ENCODE measurements at regions of chr20 and their contacts with region 1.

Region 1: GRCh38 chr20:58447511-58448391 is 58.7 kb downstream of the VAPB start:
- DNase-seq: peak; percentile 14 to 53
- ATAC-seq: peak; percentile 56 to 86
- H3K4me3 ChIP-seq: no peak overlapping the region
- H3K27ac ChIP-seq: no peak overlapping the region
- H3K4me1 ChIP-seq: no peaks in the 10 kb centered on the region
- H3K27me3 ChIP-seq: no peaks in the 10 kb centered on the region
- CTCF ChIP-seq: peak; percentile 49 to 72 (median 58)
- POLR2A ChIP-seq: no peak

Region 2: GRCh38 chr20:58112017-58112781 is 335.6 kb before region 1 on chr20:
- in situ Hi-C with region 1: no loop called
- intact Hi-C with region 1: no loop called
- DNase-seq: peak in 1 of 2 donors; percentile 21
- ATAC-seq: peak; percentile 56 to 58
- H3K4me3 ChIP-seq: no peak overlapping the region
- H3K27ac ChIP-seq: peak overlapping the region in 1 of 4 donors; percentile 30
- H3K4me1 ChIP-seq: no peaks in the 10 kb centered on the region
- H3K27me3 ChIP-seq: no peaks in the 10 kb centered on the region
- CTCF ChIP-seq: no peak
- POLR2A ChIP-seq: no peak

Region 3: GRCh38 chr20:58246346-58246745 is 201.4 kb before region 1 on chr20:
- in situ Hi-C with region 1: loop called in 2 of 4 experiments (anchors 10 kb)
- intact Hi-C with region 1: no loop called
- DNase-seq: no peak
- ATAC-seq: no peak
- H3K4me3 ChIP-seq: no peak overlapping the region
- H3K27ac ChIP-seq: no peak overlapping the region
- H3K4me1 ChIP-seq: no peaks in the 10 kb centered on the region
- H3K27me3 ChIP-seq: no peaks in the 10 kb centered on the region
- CTCF ChIP-seq: no peak
- POLR2A ChIP-seq: no peak

Region 4: DNA sequence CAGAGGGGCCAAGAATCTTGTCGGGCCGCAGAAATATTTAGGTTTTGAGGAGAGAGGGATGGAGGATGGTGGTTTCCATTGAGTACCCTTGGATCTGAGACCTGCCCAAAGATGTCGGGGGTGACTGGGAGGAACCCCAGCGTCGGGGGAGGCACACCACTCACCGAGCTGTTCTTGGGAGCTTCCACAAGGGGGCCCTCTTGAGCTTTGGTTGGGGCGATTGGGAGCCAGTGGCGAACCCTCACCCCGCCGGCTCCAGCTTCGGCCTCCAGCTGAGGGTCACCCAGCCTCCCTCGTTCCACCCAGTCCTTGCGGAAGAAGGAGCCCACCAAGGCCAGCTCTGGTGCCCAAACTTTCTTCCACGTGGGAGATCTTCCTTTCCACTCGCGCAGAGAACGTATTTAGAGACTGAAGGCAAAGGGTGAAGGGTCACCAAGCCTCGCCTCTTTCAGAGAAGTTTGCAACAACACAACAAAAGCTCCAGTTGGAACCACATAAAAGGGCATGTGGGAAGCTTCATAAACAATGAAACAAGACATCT is 33.8 kb after region 1 on chr20:
- in situ Hi-C with region 1: no loop called
- intact Hi-C with region 1: no loop called
- DNase-seq: no peak
- ATAC-seq: no peak
- H3K4me3 ChIP-seq: no peak overlapping the region
- H3K27ac ChIP-seq: no peak overlapping the region
- H3K4me1 ChIP-seq: no peaks in the 10 kb centered on the region
- H3K27me3 ChIP-seq: no peaks in the 10 kb centered on the region
- CTCF ChIP-seq: peak in 4 of 5 experiments; percentile 21 to 37 (median 31)
- POLR2A ChIP-seq: no peak